Posterior cingulate gyrus (tissue), 11 donors: ENCODE measurements at regions of chr6 and their contacts with region 1.

Region 1: DNA sequence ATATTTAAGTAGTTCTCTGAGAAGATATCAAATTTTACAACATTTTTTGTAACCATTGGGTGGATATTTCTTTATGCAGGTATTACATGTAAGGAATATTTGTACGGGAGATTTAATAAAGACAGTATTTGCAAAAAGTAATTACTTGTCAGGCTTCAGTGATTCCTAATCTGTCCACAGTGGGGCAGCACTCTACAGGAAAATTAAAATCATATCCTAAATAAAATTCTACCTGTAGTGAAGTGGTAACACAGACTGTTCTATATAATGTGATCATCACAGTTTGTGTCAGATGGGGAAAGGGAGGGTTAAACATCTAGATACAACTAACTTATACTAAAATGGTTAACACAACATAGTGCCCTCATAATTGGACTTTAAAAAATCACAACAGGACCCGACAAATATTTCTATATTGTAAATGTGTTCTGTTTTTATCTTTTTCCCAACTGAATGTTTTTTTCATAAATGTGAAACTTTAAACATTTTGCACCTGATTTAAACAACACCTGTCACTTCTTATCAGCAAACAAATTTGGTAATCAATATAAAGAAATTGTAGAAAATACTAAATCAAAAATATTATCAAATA is 145.6 kb upstream of the MANEA start:
- DNase-seq: peak in 5 of 10 donors; percentile 8 to 36 (median 22)

Region 2: DNA sequence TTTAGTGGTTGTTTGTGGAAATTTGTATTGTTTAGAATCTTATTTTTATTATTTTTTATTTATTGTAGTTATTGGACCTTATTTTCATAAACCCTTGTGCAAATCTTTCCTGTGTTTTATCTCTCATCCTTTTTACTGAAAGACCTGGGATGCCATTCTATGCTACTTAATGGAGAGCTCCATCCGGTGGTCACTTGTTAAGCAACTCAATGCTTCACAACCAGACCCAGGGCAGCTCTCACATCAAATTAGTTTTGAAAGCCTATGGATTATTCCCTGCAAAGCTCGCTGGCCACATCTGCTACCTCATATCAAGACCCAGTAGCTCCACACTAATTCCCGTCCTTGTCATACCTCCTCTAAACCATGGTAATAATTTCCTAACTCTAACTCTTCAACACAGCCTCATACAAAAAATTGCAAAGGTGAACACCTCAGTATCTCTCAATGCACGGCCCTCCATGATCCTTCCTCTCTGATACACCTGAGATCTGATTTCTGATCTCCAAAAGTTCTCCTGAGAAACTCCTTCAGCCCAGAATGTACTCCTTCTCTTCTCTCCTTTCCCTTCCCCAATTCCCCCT is 151.0 kb before region 1 on chr6:
- intact Hi-C with region 1: no loop called
- DNase-seq: no peak

Region 3: GRCh38 chr6:95679981-95680380 is 248.2 kb after region 1 on chr6:
- intact Hi-C with region 1: no loop called
- DNase-seq: no peak

Region 4: GRCh38 chr6:96468681-96469224 is 1037.0 kb after region 1 on chr6:
- intact Hi-C with region 1: loop called (anchors 5 kb)
- DNase-seq: no peak